Activated B cell treated with CpG ODN at 0.5 μM for 24 hours (primary cell): ENCODE measurements at regions of chr1 and their contacts with region 1.

Region 1: DNA sequence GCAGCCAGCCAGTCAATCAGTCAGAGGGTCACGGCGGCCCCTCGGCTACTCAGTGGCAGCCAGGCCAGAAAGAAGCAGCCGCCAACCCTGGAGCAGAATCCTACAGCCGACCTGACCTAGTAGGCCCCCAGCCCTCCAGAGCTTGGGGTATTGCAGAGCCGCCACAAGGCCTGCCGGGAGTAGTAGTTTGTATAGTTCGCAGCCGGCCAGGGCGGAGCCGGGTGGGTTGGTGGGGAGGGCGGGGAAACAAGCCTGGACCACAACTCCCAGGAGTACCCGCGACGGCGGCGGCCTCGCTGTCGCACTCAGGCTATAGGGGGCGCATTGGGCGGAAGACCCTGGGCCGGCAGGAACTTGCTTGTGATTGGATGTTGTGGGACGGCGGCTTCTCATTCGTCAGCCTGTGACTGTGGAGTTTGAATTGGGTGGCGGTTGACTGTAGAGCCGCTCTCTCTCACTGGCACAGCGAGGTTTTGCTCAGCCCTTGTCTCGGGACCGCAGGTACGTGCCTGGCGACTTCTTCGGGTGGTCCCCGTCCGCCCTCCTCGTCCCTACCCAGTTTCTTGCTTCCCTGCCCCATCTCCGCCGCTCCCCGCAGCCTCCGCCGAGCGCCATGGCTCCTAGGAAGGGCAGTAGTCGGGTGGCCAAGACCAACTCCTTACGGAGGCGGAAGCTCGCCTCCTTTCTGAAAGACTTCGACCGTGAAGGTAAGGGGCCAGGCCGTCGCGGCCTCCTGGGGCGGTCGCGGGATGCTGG is at the start of gene CDCA8:
- DNase-seq: peak; percentile 95
- ATAC-seq: peak; percentile 92
- H3K4me3 Mint-ChIP-seq: peak within 1 kb of the TSS; percentile 93
- H3K27ac Mint-ChIP-seq: peak within 1 kb of the TSS; percentile 91
- H3K4me1 Mint-ChIP-seq: peaks cover 47% of the 10 kb centered on the region
- H3K27me3 Mint-ChIP-seq: no peaks in the 10 kb centered on the region
- CTCF ChIP-seq: no peak
- total RNA-seq, gene CDCA8: 1.9 and 2.9 TPM in 2 replicates

Region 2: DNA sequence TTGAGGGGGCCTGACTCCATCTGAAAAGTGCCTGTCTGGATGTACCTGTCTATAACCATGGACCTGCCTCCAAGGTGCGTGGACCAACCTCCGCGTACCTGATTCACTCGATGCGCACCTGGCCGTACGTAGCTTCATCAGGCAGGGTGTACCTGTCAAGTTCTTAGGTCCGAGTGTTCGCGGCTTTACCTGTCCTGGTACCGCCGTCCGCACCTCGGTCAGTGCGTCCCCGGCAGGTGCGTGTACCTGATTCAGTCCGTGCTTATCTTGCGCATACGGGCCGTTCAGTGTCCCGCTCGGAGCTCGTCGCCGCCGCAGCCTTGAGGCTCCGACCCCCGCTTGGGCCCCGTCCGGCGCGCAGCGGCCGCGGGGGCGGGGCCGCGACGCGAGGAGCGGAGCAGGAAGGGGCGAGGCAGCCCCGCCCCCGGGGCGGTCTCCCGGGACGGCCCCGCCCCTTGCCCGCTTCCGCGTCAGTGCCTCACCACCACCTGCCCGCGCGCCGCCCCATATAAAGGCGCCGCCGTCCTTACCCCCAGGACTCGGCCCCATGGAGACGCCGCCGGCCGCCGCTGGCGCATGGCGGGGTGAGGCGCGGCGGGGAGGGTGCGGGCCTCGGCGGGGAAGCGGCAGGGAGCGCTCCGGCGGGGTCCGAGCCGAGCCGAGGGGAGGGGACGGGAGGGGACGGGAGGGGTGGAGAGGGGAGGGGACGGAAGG is 218.1 kb before region 1 on chr1 and contains the start of gene ZC3H12A:
- CTCF ChIA-PET with region 1: no interaction called
- POLR2A ChIA-PET with region 1: interaction called, 29 read pairs
- intact Hi-C with region 1: loop called (anchors 1 kb)
- DNase-seq: peak; percentile 98
- ATAC-seq: peak; percentile 65
- H3K4me3 Mint-ChIP-seq: peak within 1 kb of the TSS; percentile 99
- H3K27ac Mint-ChIP-seq: peak within 1 kb of the TSS; percentile 92
- H3K4me1 Mint-ChIP-seq: peaks cover 36% of the 10 kb centered on the region
- H3K27me3 Mint-ChIP-seq: peaks cover 6% of the 10 kb centered on the region
- CTCF ChIP-seq: no peak
- total RNA-seq, gene ZC3H12A: 140 and 145 TPM in 2 replicates

Region 3: DNA sequence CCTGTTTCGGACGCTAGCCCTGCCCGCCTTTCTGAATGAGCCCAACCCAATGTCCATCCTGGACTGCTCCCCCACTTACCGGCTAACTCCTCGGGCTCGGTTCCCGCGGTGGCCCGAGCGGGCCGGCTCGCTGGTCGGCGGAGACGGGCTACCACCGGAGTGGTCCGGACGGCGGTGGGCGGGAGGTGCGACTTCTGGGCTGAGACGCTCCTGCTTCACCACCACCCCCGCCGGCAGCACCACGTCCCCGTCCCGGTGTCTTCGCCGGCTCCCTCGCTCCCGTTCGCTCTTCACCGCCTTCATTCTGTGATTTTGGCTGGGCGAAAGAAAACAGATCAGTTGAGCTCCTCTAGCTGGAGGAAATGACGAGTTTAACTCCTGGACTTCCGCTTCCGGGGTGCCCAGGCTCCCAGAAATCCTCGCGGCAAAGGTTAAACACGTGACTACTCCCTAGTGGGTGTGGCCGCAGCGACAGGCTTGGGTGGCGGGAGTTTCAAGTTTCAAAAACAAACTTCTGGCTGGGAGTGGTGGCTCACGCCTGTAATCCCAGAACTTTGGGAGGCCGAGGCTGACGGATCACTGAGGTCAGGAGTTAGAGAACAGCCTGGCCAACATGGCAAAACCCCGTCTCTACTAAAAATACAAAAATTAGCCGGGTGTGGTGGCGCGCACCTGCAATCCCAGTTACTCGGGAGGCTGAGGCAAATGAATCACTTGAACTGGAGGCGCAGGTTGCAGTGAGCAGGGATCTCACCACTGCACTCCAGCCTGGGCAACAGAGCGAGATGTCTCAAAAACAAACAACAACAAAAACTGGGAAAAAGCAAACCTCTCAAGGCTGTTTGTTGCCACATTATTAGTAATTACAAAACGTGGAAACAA is 138.1 kb before region 1 on chr1 and contains the start of gene SNIP1:
- CTCF ChIA-PET with region 1: no interaction called
- POLR2A ChIA-PET with region 1: interaction called, 6 read pairs
- intact Hi-C with region 1: loop called (anchors 1 kb)
- DNase-seq: peak; percentile 84
- ATAC-seq: peak; percentile 98
- H3K4me3 Mint-ChIP-seq: peak within 1 kb of the TSS; percentile 96
- H3K27ac Mint-ChIP-seq: peak within 1 kb of the TSS; percentile 95
- H3K4me1 Mint-ChIP-seq: peaks cover 34% of the 10 kb centered on the region
- H3K27me3 Mint-ChIP-seq: peaks cover 9% of the 10 kb centered on the region
- CTCF ChIP-seq: no peak
- total RNA-seq, gene SNIP1: 34.7 and 35.7 TPM in 2 replicates

Region 4: DNA sequence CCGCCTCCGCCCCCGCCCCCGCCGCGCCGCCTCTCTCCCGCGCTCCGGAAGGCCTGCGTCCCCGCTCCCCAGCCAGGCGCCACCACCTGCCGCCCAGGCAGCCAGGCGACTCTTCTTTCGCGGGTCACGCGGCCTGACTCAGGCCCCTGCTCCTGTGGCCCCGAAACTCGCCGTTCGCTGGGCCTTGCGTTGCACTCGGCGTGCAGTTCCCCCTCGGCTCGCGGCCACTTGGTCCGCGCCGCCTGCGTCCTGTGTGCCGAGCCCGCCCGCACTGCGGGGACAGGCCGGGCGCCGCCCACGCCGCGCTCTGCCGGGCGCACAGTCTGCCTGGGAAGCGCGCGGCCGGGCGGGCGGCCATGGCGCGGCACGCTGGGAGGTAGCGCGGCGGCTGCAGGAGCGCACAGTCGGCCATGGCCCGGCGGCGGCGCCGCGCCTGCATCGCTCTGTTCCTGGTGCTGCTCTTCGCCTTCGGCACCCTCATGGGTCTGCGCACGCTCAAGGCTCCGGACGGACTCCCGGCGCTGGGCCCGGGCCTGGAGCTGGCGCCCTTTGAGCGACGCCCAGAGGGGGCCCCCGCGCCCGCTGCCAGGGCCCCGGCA is 101.6 kb after region 1 on chr1 and contains the start of gene MANEAL:
- CTCF ChIA-PET with region 1: no interaction called
- POLR2A ChIA-PET with region 1: interaction called, 4 read pairs
- intact Hi-C with region 1: loop called (anchors 5 kb)
- DNase-seq: peak; percentile 56
- ATAC-seq: peak; percentile 79
- H3K4me3 Mint-ChIP-seq: peak within 1 kb of the TSS; percentile 83
- H3K27ac Mint-ChIP-seq: no peak within 1 kb of the TSS
- H3K4me1 Mint-ChIP-seq: peaks cover 23% of the 10 kb centered on the region
- H3K27me3 Mint-ChIP-seq: peaks cover 13% of the 10 kb centered on the region
- CTCF ChIP-seq: no peak
- total RNA-seq, gene MANEAL: 5.3 and 5.4 TPM in 2 replicates

Region 5: DNA sequence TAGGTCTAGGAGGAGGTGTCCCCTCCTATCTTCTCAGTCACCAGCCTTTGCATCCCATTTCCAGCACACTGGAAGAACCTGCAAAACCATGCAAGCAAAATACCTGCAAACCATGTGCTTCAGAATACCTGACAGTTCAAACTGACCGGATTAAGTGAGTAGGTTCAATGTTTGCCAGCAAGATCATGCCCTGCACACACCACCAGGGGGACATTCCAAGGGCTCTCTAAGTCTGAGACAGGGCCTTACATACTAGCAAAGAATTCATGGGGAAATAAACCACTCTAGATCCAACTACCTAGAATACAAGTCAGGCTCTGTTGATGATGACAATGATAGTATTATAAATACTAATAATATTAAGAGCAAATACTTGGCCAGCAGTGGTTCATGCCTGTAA is 227.0 kb after region 1 on chr1:
- CTCF ChIA-PET with region 1: no interaction called
- POLR2A ChIA-PET with region 1: no interaction called
- intact Hi-C with region 1: loop called (anchors 2 kb)
- DNase-seq: no peak
- ATAC-seq: no peak
- H3K4me3 Mint-ChIP-seq: no peak overlapping the region
- H3K27ac Mint-ChIP-seq: no peak overlapping the region
- H3K4me1 Mint-ChIP-seq: peaks cover 54% of the 10 kb centered on the region
- H3K27me3 Mint-ChIP-seq: no peaks in the 10 kb centered on the region
- CTCF ChIP-seq: no peak

Region 6: GRCh38 chr1:38012363-38013226 is 320.3 kb after region 1 on chr1 and contains the start of gene UTP11:
- CTCF ChIA-PET with region 1: no interaction called
- POLR2A ChIA-PET with region 1: interaction called, 4 read pairs
- intact Hi-C with region 1: loop called (anchors 1 kb)
- DNase-seq: peak; percentile 74
- ATAC-seq: peak; percentile 97
- H3K4me3 Mint-ChIP-seq: peak within 1 kb of the TSS; percentile 100
- H3K27ac Mint-ChIP-seq: peak within 1 kb of the TSS; percentile 94
- H3K4me1 Mint-ChIP-seq: peaks cover 27% of the 10 kb centered on the region
- H3K27me3 Mint-ChIP-seq: no peaks in the 10 kb centered on the region
- CTCF ChIP-seq: no peak
- total RNA-seq, gene UTP11: 26.1 and 28.6 TPM in 2 replicates